ENCODE measurements at regions of chr6 and their contacts with region 1.

Region 1: DNA sequence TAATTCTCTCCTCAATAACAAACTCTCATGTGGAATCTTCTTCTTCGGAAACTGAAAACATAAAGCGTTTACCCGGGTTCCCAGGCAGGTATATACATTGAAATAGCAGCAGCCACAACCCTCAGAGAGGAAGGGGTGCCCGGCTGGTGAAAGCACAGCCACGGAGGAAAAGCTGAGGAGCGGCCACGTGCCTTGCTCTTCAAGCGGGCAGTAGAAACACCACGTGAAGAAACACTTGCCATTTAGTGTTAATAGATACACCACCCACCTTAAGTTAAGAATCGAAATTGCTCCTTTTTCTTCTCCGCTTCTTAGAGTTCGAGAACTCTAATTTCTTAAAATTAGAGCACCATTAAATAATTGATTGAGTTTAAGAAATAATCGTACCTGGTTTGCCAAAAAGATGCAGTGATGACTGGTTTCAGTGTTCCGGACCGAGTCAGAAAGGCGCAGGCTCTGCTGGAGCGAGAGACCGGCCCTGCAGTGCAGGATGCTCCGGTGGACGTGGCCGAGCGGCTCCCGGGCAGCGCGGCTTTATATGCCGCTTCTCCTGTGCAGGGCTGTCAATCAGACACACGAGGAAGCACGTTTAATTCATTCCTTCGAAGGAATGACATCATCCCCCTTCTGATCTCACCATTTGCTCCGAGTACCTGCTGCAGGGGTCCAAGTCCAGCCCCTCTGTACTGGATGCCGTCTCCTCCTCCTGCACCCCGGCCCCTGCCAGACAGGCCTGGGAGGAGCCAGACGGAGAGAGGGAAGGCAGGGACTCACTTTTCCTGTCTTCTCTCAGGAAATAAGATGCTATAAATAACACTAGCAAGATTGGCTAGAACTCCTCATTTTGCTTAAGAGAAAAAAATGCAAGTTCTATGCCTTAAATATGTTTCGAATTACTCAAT is at the start of gene THBS2:
- DNase-seq: peak in 1 of 2 donors; percentile 86
- H3K4me3 ChIP-seq: peak within 1 kb of the TSS; percentile 32 to 82
- H3K27ac ChIP-seq: peak within 1 kb of the TSS; percentile 63 to 71
- H3K4me1 ChIP-seq: peaks cover 0 to 14% of the 10 kb centered on the region in 2 donors
- H3K27me3 ChIP-seq: no peaks in the 10 kb centered on the region
- CTCF ChIP-seq: no peak
- total RNA-seq, gene THBS2: 709 TPM

Region 2: GRCh38 chr6:168956884-168957730 is 296.5 kb before region 1 on chr6:
- intact Hi-C with region 1: loop called (anchors 2 kb)
- DNase-seq: peak in 1 of 2 donors; percentile 77
- H3K4me3 ChIP-seq: no peak overlapping the region
- H3K27ac ChIP-seq: no peak overlapping the region
- H3K4me1 ChIP-seq: peaks cover 0 to 3% of the 10 kb centered on the region in 2 donors
- H3K27me3 ChIP-seq: no peaks in the 10 kb centered on the region
- CTCF ChIP-seq: peak; percentile 78 to 90 (median 83)

Region 3: DNA sequence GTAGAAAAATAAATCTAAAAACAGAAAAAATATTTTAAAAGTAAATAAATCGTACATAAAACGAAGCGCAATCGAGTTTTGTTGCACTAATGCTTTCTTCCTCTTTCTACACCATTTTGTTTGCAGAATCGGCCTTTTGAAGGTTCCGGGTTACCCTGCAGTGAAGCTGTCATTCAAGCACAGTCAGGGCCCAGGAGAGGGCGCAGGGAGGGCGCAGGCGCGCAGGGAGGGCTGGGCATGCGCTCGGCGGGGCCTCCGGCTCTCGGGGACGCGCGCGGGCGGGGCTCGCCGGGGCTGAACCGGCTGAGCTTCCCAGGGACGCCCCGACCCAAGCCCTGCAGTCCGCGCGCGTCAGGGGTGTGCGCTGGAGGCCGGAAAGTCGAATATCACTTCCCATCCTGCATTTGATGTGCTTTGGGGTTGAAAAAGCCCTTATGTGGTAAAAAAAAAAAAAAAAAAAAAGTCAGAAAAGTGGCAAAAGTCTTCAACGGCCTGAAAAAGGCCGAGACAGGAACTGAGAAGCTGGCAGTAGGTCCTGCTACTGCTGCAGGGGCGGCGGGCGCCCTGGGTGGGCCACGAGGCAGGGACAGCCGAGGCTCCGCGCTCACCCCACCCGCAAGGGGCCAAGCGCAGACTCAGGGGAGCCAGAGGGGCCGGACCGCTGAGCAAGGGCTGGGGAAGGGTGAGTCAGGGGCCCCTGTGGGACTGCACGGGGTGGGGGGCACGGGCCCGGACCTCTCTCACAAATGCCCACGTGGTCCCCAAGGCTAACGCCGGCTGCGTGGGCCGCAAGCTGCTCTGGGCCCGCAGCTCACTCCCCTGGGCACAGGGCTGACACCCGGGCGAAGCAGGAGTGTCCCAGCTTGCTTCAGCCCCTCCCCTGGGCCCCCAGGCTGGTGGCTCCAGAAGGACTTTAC is 40.4 kb before region 1 on chr6:
- intact Hi-C with region 1: loop called (anchors 5 kb)
- DNase-seq: peak; percentile 61 to 94
- H3K4me3 ChIP-seq: peak overlapping the region; percentile 39 to 45
- H3K27ac ChIP-seq: peak overlapping the region; percentile 93 to 95
- H3K4me1 ChIP-seq: peaks cover 17 to 26% of the 10 kb centered on the region in 2 donors
- H3K27me3 ChIP-seq: no peaks in the 10 kb centered on the region
- CTCF ChIP-seq: peak; percentile 41 to 61 (median 42)

Region 4: DNA sequence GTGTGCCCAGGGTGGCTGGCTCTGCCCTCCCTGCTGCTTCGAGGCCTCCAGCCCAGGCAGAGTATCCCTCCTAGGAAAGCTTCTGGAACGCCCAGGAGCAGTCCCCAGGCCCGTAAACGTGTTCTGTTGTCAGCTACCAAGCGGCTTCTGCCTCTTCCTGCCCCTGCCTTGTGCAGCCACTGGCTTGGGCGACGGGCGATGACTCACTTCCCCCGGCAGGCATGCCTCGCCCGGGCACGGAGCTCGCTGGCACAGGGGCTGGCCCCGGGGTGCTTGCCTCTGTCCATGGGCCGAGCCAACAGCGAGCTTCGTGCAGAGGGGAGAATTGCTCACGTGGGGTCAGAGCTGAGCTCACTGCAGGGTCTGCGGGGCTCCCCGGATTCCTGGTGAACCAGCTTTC is 86.8 kb after region 1 on chr6:
- intact Hi-C with region 1: loop called (anchors 5 kb)
- DNase-seq: peak in 1 of 2 donors; percentile 82
- H3K4me3 ChIP-seq: no peak overlapping the region
- H3K27ac ChIP-seq: peak overlapping the region; percentile 4 to 53
- H3K4me1 ChIP-seq: peaks cover 8 to 9% of the 10 kb centered on the region in 2 donors
- H3K27me3 ChIP-seq: no peaks in the 10 kb centered on the region
- CTCF ChIP-seq: no peak

Region 5: GRCh38 chr6:169487579-169488436 is 234.2 kb after region 1 on chr6:
- intact Hi-C with region 1: loop called (anchors 5 kb)
- DNase-seq: no peak
- H3K4me3 ChIP-seq: no peak overlapping the region
- H3K27ac ChIP-seq: no peak overlapping the region
- H3K4me1 ChIP-seq: peaks cover 12 to 21% of the 10 kb centered on the region in 2 donors
- H3K27me3 ChIP-seq: no peaks in the 10 kb centered on the region
- CTCF ChIP-seq: peak in 2 of 3 experiments; percentile 5 to 29